ENCODE measurements at regions of chr5 and their contacts with region 1.

Region 1: DNA sequence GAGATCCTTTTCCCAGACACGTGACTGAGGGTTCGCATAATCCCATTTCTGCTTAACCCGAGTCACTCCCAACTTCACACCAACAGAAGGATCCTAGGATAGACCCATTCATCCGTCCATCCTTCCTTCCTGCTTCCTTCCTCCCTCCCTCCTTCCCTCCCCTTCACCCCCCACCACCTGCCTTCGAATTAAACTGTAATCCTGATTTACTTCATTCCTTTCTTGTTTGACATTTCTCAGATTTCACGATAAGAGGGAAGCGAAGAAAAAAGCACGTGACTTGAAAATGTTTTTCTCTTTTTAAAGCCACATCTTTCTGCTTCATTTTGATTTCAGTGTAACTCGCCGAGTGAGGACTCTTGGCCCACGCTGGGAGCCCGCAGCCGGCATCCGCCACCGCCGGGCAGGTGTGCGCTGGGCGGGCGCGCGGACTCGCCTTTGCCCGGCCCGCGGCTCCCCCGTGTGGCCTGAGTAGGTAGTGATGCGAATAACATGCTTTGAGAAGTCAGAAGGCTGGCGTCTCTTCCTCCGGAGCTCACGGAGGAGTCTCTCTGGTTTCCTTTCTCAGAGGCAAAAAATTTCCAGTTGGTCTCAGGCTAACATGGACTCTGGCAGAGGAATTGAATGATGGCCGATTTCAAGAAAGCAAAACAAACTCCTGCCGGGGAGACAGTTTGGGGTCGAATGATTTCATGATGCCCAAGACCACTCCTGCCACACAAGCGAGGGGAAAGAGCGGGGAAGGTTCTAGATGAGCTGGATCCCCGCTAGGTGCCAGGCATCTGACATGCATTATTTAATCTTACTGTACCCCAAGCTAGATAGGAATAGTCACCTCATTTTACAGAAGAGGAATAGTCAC is 117.7 kb downstream of the SLC12A2 start:
- DNase-seq: peak; percentile 50
- ATAC-seq: peak; percentile 90
- H3K4me3 ChIP-seq: peak overlapping the region; percentile 20; the same call in 1 of the 2 replicates
- H3K27ac ChIP-seq: no peak overlapping the region
- H3K4me1 ChIP-seq: peaks cover 5% of the 10 kb centered on the region
- H3K27me3 ChIP-seq: peaks cover 2% of the 10 kb centered on the region
- CTCF ChIP-seq: peak; percentile 88
- POLR2A ChIP-seq: no peak
- RAD21 ChIP-seq: peak; percentile 94

Region 2: DNA sequence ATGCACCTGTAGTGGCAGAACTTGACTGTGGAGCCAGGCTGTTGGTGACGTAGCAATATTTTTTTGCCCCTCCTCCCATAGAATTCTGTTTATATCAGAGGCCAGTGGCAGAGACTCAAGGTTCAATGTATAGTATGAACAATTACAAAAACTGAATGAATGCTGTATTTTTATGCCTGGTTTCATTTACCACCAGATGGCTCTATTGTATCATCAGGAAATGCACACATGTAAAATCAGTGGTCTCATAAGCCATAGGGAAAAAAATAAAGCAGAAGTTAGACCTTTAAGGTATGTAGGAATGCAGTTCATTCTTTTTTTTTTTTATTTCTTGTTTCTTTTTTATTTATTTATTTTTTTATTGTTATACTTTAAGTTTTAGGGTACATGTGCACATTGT is 454.5 kb before region 1 on chr5:
- CTCF ChIA-PET with region 1: no interaction called
- POLR2A ChIA-PET with region 1: no interaction called
- dilution Hi-C with region 1: no loop called
- in situ Hi-C with region 1: no loop called
- intact Hi-C with region 1: loop called (anchors 1 kb)
- DNase-seq: peak; percentile 55
- ATAC-seq: peak; percentile 40; the same call in 1 of the 2 replicates
- H3K4me3 ChIP-seq: no peak overlapping the region
- H3K27ac ChIP-seq: no peak overlapping the region
- H3K4me1 ChIP-seq: no peaks in the 10 kb centered on the region
- H3K27me3 ChIP-seq: peaks cover 8% of the 10 kb centered on the region
- CTCF ChIP-seq: peak; percentile 77
- POLR2A ChIP-seq: no peak
- RAD21 ChIP-seq: peak; percentile 84

Region 3: DNA sequence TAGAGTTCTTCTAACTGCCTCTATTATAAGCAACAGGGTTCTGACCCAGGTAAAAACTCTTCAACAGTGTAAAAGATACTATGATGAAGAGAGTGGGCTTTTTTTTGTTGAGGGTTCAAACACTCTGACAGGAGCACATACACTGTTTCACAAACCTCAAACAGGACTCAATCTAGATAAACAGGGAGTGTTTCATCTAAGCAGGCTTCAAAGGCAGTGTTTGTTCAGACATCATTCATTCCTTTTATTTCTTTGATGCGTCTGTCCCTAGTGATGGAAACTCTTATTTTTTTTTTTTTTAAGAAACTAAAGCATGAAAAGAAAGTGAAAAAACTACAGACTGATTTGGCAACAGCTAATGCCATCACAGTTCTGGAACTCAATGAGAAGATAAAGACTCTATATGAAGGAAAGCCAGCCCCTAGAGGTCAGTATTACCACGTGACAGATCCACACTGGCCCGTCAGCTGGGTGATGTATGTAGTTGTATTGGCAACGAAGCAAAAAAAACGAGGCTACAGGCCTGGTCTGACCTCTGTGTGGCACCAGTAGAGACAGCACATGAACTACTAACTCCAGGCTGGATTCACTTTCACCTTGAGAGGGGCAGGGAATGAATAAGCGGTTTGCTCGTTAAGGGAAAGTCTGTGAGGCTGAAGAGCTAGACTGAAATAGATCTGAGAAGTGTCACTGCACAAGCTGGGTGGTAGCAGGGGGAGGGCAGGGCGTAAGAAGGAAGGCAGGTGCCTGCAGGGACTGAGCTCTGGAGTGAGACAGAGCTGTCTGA is 325.9 kb before region 1 on chr5:
- CTCF ChIA-PET with region 1: interaction called, 5 read pairs
- POLR2A ChIA-PET with region 1: interaction called, 3 read pairs
- dilution Hi-C with region 1: no loop called
- in situ Hi-C with region 1: loop called (anchors 10 kb)
- intact Hi-C with region 1: loop called (anchors 1 kb)
- DNase-seq: peak; percentile 52
- ATAC-seq: peak; percentile 71
- H3K4me3 ChIP-seq: no peak overlapping the region
- H3K27ac ChIP-seq: no peak overlapping the region
- H3K4me1 ChIP-seq: 0 out of 2 replicates have a peak, but pooled peaks cover 2% of the 10 kb centered on the region
- H3K27me3 ChIP-seq: no peaks in the 10 kb centered on the region
- CTCF ChIP-seq: peak; percentile 41
- POLR2A ChIP-seq: no peak
- RAD21 ChIP-seq: peak; percentile 51

Region 4: DNA sequence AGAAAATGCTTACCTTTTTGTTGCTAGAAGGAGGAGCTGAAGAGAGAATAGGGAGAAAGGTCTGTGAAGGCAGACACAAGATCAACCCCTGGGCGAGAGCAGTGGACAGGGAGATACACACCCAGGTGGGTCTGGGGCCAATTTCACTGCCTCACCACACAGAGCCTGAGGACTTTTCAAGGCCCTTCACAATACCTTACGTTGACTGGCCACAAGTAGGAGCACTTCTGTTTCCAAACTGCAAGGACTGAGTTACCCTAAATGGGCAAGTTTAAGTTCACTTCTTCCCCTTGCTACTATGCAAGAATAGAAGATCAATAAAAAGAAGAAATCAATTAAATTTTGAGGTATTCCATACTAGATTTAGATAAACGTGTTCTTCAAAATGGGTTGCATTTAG is 292.2 kb before region 1 on chr5:
- CTCF ChIA-PET with region 1: no interaction called
- POLR2A ChIA-PET with region 1: no interaction called
- dilution Hi-C with region 1: no loop called
- in situ Hi-C with region 1: loop called (anchors 10 kb)
- intact Hi-C with region 1: loop called (anchors 10 kb)
- DNase-seq: peak; percentile 55
- ATAC-seq: peak; percentile 72
- H3K4me3 ChIP-seq: no peak overlapping the region
- H3K27ac ChIP-seq: no peak overlapping the region
- H3K4me1 ChIP-seq: no peaks in the 10 kb centered on the region
- H3K27me3 ChIP-seq: no peaks in the 10 kb centered on the region
- CTCF ChIP-seq: peak; percentile 50
- POLR2A ChIP-seq: no peak
- RAD21 ChIP-seq: peak; percentile 46

Region 5: GRCh38 chr5:128163991-128164390 is 37.3 kb before region 1 on chr5:
- CTCF ChIA-PET with region 1: no interaction called
- POLR2A ChIA-PET with region 1: no interaction called
- dilution Hi-C with region 1: no loop called
- in situ Hi-C with region 1: no loop called
- intact Hi-C with region 1: no loop called
- DNase-seq: peak; percentile 60
- ATAC-seq: peak; percentile 63
- H3K4me3 ChIP-seq: no peak overlapping the region
- H3K27ac ChIP-seq: no peak overlapping the region
- H3K4me1 ChIP-seq: no peaks in the 10 kb centered on the region
- H3K27me3 ChIP-seq: no peaks in the 10 kb centered on the region
- CTCF ChIP-seq: no peak
- POLR2A ChIP-seq: no peak
- RAD21 ChIP-seq: no peak

Region 6: GRCh38 chr5:128844354-128844923 is 643.1 kb after region 1 on chr5:
- CTCF ChIA-PET with region 1: no interaction called
- POLR2A ChIA-PET with region 1: no interaction called
- dilution Hi-C with region 1: no loop called
- in situ Hi-C with region 1: loop called (anchors 10 kb)
- intact Hi-C with region 1: no loop called
- DNase-seq: peak; percentile 28
- ATAC-seq: no peak
- H3K4me3 ChIP-seq: no peak overlapping the region
- H3K27ac ChIP-seq: no peak overlapping the region
- H3K4me1 ChIP-seq: no peaks in the 10 kb centered on the region
- H3K27me3 ChIP-seq: no peaks in the 10 kb centered on the region
- CTCF ChIP-seq: peak; percentile 51
- POLR2A ChIP-seq: no peak
- RAD21 ChIP-seq: peak; percentile 54

Measured in IMR-90 (cell line).